ENCODE measurements at regions of chr6 and their contacts with region 1.

Region 1: GRCh38 chr6:33771146-33772081 is 17.5 kb downstream of the LEMD2 start:
- DNase-seq: peak; percentile 98
- H3K4me3 ChIP-seq: peak overlapping the region; percentile 23; the same call in 1 of the 2 replicates
- CTCF ChIP-seq: peak; percentile 92

Region 2: GRCh38 chr6:33744001-33744848 is 27.2 kb before region 1 on chr6:
- CTCF ChIA-PET with region 1: interaction called, 584 read pairs
- POLR2A ChIA-PET with region 1: interaction called, 14 read pairs
- DNase-seq: no peak
- H3K4me3 ChIP-seq: no peak overlapping the region
- CTCF ChIP-seq: peak; percentile 90

Region 3: GRCh38 chr6:33794891-33795623 is 23.6 kb after region 1 on chr6:
- CTCF ChIA-PET with region 1: interaction called, 10 read pairs
- POLR2A ChIA-PET with region 1: no interaction called
- DNase-seq: no peak
- H3K4me3 ChIP-seq: no peak overlapping the region
- CTCF ChIP-seq: no peak

Region 4: DNA sequence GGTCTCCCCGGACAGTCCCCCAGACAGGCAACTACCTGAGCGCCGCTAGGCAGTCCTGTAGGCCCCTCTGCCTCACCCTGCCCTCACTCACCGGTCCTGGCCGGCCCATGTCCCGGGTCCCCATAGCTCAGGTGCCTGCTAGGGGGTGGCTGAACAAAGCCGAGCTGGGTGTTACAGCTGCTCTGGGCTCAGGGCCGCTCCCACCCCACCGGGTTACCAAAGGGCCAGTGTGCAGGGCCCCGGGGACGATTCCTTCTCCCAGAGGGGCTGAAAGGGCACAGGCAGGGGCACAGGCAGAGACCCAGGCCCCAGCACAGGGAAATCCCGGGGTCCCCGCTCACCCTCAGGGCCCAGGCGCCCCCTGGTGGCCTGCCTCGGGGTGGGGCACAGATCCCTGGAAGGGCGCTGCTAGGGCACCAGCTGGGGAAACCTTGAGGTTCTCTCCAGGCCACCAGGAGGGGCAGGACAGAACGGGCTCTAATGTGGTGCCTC is 256.1 kb after region 1 on chr6:
- CTCF ChIA-PET with region 1: interaction called, 179 read pairs
- POLR2A ChIA-PET with region 1: interaction called, 6 read pairs
- DNase-seq: no peak
- H3K4me3 ChIP-seq: no peak overlapping the region
- CTCF ChIP-seq: peak; percentile 90

Region 5: DNA sequence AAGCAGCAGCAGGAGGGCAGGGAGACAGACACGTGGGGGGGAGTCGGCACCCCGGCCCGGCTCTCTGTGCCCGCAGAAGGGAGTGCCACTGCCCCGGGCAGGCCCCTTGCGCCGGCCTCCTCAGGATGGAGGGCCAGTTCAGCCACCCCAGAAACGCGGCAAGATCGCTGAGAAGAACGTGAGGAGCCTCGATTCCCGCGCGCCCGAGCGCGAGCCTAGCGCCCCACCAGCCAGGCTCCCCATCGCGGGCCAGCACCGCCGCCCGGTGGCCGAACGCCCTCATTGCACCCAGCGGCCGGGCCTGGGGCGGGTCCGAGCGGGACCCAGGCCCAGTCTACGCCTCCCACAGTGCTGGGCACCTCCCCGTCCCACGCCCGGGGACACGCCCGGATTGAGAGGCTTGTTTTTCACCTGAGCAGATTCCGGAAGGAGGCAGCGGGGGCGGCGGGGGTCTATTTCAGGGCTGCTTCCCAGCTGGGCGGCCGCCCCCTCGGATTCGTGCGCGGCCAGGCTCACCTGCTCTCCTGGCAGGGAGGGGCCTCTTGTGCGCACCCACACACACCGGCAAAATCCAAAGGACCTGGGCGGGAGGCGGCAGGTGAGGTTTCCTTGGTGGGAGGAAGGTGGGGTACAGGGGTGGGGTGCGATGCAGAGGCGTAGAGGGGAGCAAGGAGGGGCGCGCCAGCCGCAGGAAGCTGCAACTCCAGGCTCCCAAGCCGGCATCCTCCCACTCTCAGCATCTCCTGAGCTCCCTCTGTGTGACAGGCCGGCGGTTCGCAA is 383.4 kb after region 1 on chr6:
- CTCF ChIA-PET with region 1: interaction called, 99 read pairs
- POLR2A ChIA-PET with region 1: no interaction called
- DNase-seq: no peak
- H3K4me3 ChIP-seq: peak overlapping the region; percentile 42
- CTCF ChIP-seq: peak; percentile 94

Measured in AG04449 (cell line).